Heart left ventricle (tissue), 16 donors: ENCODE measurements at regions of chrX and their contacts with region 1.

Region 1: GRCh38 chrX:130916636-130917422 is 13.8 kb upstream of the ENOX2 start:
- DNase-seq: peak in 3 of 5 donors; percentile 22 to 40 (median 29)
- ATAC-seq: peak in 2 of 4 donors; percentile 53 to 62
- H3K4me3 ChIP-seq: no peak overlapping the region
- H3K27ac ChIP-seq: no peak overlapping the region
- H3K4me1 ChIP-seq: no peaks in the 10 kb centered on the region
- H3K27me3 ChIP-seq: peaks cover 0 to 22% (median 0%) of the 10 kb centered on the region in 9 donors
- CTCF ChIP-seq: peak; percentile 52 to 80 (median 66)
- POLR2A ChIP-seq: no peak

Region 2: GRCh38 chrX:130330706-130331105 is 586.1 kb before region 1 on chrX:
- intact Hi-C with region 1: loop called in 3 of 10 experiments (anchors 5 kb)
- DNase-seq: peak; percentile 7 to 66 (median 38)
- ATAC-seq: peak in 2 of 4 donors; percentile 70 to 72
- H3K4me3 ChIP-seq: no peak overlapping the region
- H3K27ac ChIP-seq: no peak overlapping the region
- H3K4me1 ChIP-seq: no peaks in the 10 kb centered on the region
- H3K27me3 ChIP-seq: peaks cover 0 to 37% (median 5%) of the 10 kb centered on the region in 9 donors
- CTCF ChIP-seq: peak in 10 of 12 donors; percentile 10 to 35 (median 28)
- POLR2A ChIP-seq: no peak

Region 3: DNA sequence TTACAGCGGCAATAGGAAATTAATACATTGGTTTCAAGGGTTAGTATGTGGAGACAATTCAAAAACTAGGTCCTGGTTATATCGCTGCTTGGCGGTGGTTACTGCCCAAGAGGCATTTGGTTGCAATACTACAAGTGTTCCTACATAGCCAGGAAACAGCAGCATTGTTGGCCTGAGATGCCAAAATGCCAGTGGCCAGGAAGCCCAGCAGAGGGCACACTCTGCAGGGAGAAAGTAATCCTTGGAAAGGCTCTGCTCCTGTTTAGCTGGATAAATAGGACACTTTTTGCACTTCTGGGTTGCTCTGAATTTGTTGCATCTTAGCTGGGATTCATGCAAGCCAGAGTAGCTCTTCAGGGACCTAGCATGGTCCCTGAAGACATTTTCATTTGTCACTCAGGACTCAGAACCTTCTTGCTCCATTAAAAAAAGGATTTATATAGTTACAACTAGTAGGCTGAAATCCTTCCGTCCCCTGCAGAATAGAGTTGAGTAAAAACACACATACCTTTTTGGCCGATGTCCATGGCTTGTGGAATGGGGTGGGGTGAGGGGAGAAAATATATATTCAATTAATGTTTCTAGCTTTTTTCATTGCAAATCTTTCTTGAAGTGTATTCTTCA is 523.3 kb before region 1 on chrX:
- intact Hi-C with region 1: loop called in 8 of 10 experiments (anchors 5 to 10 kb)
- DNase-seq: peak in 3 of 5 donors; percentile 9 to 39 (median 27)
- ATAC-seq: peak in 2 of 4 donors; percentile 43 to 72
- H3K4me3 ChIP-seq: no peak overlapping the region
- H3K27ac ChIP-seq: no peak overlapping the region
- H3K4me1 ChIP-seq: no peaks in the 10 kb centered on the region
- H3K27me3 ChIP-seq: peaks cover 0 to 32% (median 0%) of the 10 kb centered on the region in 9 donors
- CTCF ChIP-seq: peak; percentile 39 to 59 (median 50)
- POLR2A ChIP-seq: no peak

Region 4: DNA sequence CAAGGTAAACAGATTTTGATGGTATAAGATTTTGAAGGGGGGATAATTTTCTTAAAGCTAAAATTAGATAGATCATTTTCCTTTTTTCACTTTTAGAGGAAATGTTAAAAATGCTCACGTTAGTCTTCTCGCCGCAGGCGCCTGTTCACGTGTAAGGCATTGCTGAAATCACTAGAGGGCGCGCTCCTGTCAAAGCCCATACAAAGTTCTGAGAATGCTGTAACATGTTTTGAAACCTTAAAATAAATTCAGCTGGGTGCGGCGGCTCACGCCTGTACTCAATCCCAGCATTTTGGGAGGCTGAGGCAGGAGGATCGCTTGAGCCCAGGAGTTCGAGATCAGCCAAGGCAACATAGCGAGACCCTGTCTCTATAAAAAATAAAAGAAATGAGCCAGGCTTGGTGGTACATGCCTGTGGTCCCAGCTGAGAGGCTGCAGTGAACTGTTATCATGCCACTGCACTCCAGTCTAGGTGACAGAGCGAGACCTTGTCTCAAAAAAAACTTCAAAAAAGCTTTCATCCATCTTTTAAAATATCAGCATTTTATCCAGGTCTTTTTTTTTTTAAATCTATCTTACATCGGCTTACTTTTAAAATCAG is 377.0 kb before region 1 on chrX:
- intact Hi-C with region 1: loop called (anchors 1 to 5 kb)
- DNase-seq: peak in 4 of 5 donors; percentile 8 to 50 (median 26)
- ATAC-seq: peak in 1 of 4 donors; percentile 45
- H3K4me3 ChIP-seq: no peak overlapping the region
- H3K27ac ChIP-seq: no peak overlapping the region
- H3K4me1 ChIP-seq: no peaks in the 10 kb centered on the region
- H3K27me3 ChIP-seq: peaks cover 0 to 23% (median 0%) of the 10 kb centered on the region in 9 donors
- CTCF ChIP-seq: peak; percentile 48 to 73 (median 62)
- POLR2A ChIP-seq: no peak

Region 5: GRCh38 chrX:130575831-130576389 is 340.9 kb before region 1 on chrX:
- intact Hi-C with region 1: loop called (anchors 2 to 10 kb)
- DNase-seq: peak in 4 of 5 donors; percentile 13 to 38 (median 28)
- ATAC-seq: no peak
- H3K4me3 ChIP-seq: no peak overlapping the region
- H3K27ac ChIP-seq: no peak overlapping the region
- H3K4me1 ChIP-seq: no peaks in the 10 kb centered on the region
- H3K27me3 ChIP-seq: peaks cover 0 to 9% (median 0%) of the 10 kb centered on the region in 9 donors
- CTCF ChIP-seq: peak; percentile 38 to 74 (median 65)
- POLR2A ChIP-seq: no peak

Region 6: DNA sequence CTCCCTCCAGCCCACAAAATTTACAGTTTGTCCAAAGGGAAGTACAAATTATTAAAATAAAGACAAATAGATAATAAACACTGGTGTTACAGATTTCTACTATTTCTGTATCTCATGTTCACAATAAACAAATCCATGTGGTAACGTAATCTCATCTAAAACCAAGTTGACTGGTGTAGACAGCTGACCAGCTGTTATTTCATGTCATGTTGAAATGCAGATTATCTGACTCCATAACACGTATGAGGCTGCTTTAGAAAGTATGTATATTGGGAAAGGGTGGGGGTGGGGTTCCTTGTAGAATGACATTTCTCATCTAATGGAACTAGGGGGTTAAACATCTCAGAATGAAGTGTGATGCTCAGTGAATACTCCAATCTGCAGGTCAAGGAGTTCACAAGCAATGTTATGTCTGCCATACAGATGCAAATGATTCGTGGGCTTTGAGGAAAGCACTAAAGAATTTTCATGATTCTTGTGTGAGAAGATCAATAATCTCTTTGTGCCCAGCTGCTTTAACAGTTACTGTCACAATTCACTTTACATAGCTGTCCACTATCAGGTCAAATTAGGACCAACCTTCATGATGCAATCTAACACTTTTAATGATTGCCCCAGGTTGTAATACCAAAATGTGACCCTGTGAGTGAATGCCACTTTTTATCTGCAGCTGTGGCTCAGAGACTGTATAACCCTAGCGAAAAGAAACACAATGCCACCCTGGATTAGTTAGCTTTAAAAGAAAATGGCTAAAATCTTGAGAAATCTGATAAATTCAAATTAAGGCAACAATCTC is 127.8 kb before region 1 on chrX:
- intact Hi-C with region 1: no loop called
- DNase-seq: no peak
- ATAC-seq: no peak
- H3K4me3 ChIP-seq: no peak overlapping the region
- H3K27ac ChIP-seq: no peak overlapping the region
- H3K4me1 ChIP-seq: no peaks in the 10 kb centered on the region
- H3K27me3 ChIP-seq: no peaks in the 10 kb centered on the region
- CTCF ChIP-seq: no peak
- POLR2A ChIP-seq: no peak